Head of caudate nucleus (tissue), 42 donors: ENCODE measurements at regions of chr12 and their contacts with region 1.

Region 1: GRCh38 chr12:101830367-101831325 is at the start of gene GNPTAB:
- DNase-seq: peak; percentile 82 to 97 (median 93)

Region 2: GRCh38 chr12:101414533-101415119 is 416.0 kb before region 1 on chr12:
- intact Hi-C with region 1: loop called (anchors 10 kb)
- DNase-seq: peak in 17 of 42 donors; percentile 13 to 62 (median 34)

Region 3: DNA sequence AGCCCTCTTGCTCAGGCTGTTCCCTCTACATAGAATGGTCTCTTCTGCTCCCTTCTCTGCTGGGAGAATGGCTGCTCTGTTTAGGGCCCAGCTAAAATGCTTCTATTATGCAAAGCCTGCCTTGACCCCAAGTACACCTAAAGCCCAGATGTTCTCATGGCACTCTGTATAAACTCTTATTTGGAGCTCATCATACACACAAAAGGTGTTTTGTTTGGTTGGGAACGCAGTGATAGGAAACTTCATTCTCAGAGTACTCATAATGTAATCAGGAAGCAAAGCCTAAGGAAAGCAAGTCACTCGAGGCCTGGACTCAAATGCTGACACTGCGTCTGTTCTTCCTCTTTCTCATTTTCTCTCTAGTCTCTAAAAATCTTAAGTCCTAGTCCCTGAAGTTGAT is 53.2 kb before region 1 on chr12:
- intact Hi-C with region 1: loop called (anchors 5 kb)
- DNase-seq: peak in 12 of 42 donors; percentile 6 to 60 (median 35)

Region 4: DNA sequence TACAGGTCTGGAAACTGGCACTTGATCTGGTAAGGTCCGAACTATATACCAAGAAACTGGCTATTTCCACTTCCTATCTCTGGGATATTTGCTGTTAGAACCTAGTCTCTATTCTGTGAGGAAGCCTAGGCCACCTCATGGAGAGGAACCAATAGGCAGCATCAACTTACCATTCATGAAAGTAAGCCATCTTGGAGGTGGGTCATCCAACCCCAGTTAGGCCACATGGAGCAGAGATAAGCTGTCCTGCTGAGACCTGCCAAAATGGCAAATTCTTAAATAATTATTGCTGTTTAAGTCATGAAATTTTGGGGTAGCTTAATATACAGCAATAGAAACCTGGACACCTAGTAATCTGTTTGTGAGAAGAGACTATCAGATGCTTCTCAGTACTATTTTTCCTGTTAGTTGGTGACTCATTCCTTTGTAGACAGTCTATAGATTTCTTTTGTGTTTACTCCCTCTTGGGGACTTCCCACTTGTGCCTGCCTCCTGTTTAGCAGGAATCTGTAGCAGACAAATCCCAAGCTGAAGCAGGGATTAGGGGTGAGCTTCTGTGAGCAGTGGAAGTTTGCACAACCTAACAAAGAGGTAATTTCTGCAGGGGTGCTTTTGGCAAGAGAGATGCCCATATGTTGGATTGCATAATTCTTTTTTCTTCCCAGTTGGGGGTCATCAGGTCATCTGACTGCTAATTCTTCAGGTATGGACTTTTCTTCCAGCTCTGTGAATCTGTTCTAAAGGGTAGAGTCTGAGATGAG is 512.9 kb after region 1 on chr12:
- intact Hi-C with region 1: no loop called
- DNase-seq: no peak